Activated CD4-positive, alpha-beta T cell treated with anti-CD3 and anti-CD28 coated beads for 36 hours (primary cell): ENCODE measurements at regions of chr4 and their contacts with region 1.

Region 1: DNA sequence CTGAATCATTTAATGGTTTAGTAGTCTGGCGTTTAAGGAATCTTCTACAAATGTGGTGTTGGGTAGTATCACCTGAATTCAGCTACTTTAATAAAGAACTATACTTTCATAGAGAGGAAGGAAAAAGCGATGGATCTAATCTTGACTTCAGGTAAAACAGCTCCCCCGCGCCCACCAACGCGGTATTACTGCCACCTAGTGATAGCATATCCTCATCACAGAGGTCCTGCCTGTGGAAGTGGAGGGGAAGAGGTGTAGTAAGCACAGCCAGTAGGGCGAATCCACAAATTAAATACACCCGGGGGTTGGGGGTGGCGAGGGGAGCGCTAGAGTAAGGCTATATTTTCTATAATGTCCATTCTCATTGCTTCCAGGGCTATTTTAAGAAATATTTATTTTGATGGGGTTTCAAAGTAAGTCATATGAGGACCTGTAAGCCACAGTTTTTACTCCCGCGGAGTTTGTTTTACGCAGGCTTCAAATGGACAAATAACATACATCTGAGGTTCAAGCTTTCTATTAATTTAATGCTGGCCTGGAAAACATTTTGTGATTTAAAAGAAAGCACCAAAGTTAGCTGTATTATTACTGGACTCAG is 8.3 kb upstream of the DAPP1 start:
- DNase-seq: peak; percentile 86
- ATAC-seq: peak; percentile 95
- H3K4me3 Mint-ChIP-seq: no peak overlapping the region
- H3K27ac Mint-ChIP-seq: no peak overlapping the region
- H3K4me1 Mint-ChIP-seq: peaks cover 17% of the 10 kb centered on the region
- H3K27me3 Mint-ChIP-seq: no peaks in the 10 kb centered on the region

Region 2: GRCh38 chr4:99252746-99253145 is 555.6 kb before region 1 on chr4:
- CTCF ChIA-PET with region 1: no interaction called
- POLR2A ChIA-PET with region 1: no interaction called
- intact Hi-C with region 1: no loop called
- DNase-seq: no peak
- ATAC-seq: no peak
- H3K4me3 Mint-ChIP-seq: no peak overlapping the region
- H3K27ac Mint-ChIP-seq: no peak overlapping the region
- H3K4me1 Mint-ChIP-seq: no peaks in the 10 kb centered on the region
- H3K27me3 Mint-ChIP-seq: peaks cover 2% of the 10 kb centered on the region

Region 3: GRCh38 chr4:99462875-99463464 is 345.4 kb before region 1 on chr4:
- CTCF ChIA-PET with region 1: interaction called, 3 read pairs
- POLR2A ChIA-PET with region 1: no interaction called
- intact Hi-C with region 1: loop called in 1 of 2 experiments (anchors 2 kb)
- DNase-seq: peak; percentile 70
- ATAC-seq: peak; percentile 84
- H3K4me3 Mint-ChIP-seq: no peak overlapping the region
- H3K27ac Mint-ChIP-seq: no peak overlapping the region
- H3K4me1 Mint-ChIP-seq: no peaks in the 10 kb centered on the region
- H3K27me3 Mint-ChIP-seq: no peaks in the 10 kb centered on the region

Region 4: GRCh38 chr4:99710681-99711345 is 97.5 kb before region 1 on chr4:
- CTCF ChIA-PET with region 1: interaction called, 10 read pairs
- POLR2A ChIA-PET with region 1: no interaction called
- intact Hi-C with region 1: no loop called
- DNase-seq: peak; percentile 5
- ATAC-seq: peak; percentile 100
- H3K4me3 Mint-ChIP-seq: no peak overlapping the region
- H3K27ac Mint-ChIP-seq: no peak overlapping the region
- H3K4me1 Mint-ChIP-seq: peaks cover 13% of the 10 kb centered on the region
- H3K27me3 Mint-ChIP-seq: peaks cover 11% of the 10 kb centered on the region

Region 5: DNA sequence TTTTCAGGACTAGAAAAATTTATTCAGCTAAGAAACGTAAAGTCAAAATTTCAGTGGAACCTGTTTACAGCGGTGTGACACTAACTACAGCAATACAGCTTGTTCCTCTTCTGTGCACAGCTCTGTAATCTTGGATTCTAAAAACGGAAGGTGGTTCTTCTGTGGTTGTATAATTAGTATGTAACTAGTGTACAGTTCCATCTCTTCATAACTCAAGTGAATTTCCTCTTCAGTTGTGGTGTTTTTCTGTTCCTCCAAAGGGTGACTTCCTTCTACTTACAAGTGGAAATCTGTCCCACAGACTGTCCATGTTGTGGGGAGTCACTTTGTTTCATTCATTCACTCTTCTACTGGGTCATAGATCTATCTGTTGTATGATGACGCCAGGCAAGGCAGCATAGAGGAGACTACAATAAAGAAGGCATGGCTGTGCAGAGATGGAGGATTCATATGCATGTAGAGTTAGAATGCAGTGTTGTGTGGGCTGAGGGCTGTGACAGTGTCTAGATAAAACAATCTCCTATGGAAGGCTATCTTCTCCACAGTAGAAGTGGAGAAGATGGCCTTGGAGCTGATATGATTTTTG is 13.7 kb after region 1 on chr4:
- CTCF ChIA-PET with region 1: interaction called, 25 read pairs
- POLR2A ChIA-PET with region 1: no interaction called
- intact Hi-C with region 1: no loop called
- DNase-seq: no peak
- ATAC-seq: peak; percentile 40
- H3K4me3 Mint-ChIP-seq: no peak overlapping the region
- H3K27ac Mint-ChIP-seq: peak overlapping the region; percentile 26
- H3K4me1 Mint-ChIP-seq: peaks cover 76% of the 10 kb centered on the region
- H3K27me3 Mint-ChIP-seq: no peaks in the 10 kb centered on the region

Region 6: DNA sequence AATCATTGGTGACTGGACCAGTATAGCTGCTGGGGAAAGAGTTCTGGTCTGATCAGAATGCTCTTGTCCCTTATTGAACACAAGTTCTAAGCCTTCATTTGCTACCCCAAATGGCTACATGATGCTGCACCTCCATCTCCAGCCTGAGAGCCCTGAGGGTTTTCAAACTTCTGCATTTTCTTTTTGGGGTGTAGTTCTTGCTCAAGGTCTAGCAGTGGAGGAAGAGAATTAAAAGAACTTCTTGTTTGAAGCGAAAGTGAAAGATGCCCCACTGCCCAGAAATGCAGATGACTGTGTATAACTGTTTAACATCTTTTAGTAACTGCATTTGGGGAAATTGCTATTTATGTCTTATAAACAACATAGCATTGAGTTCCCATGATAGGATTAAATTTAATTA is 47.3 kb after region 1 on chr4:
- CTCF ChIA-PET with region 1: interaction called, 19 read pairs
- POLR2A ChIA-PET with region 1: no interaction called
- intact Hi-C with region 1: no loop called
- DNase-seq: peak; percentile 49
- ATAC-seq: peak; percentile 16
- H3K4me3 Mint-ChIP-seq: no peak overlapping the region
- H3K27ac Mint-ChIP-seq: peak overlapping the region; percentile 70
- H3K4me1 Mint-ChIP-seq: peaks cover 67% of the 10 kb centered on the region
- H3K27me3 Mint-ChIP-seq: no peaks in the 10 kb centered on the region

Region 7: DNA sequence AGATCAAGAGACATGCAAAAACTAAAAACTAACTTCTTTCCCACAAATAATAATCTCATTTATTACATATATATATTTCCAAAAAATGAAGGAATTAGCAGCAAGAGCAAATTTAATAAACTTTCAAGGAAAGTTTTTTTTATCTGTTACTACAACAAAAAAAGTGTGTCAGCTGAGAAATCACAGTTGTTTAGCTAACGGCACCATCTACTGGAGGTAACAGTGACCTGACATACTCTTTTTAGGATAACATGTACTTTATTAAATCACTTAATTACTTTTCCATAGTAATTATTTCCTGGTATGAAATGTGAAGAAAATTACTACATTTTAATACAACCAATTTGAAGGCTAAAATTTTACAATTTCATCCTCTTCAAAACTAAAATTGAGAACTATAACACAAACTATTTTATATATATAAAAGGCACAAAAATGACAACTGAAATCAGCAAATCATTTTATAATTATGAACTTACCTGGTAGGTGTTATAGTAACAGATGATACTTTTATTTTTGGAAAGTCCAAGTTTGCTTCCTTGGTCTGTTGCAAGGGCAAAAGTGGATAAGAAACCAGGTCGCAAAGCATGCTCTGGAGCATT is 76.8 kb after region 1 on chr4:
- CTCF ChIA-PET with region 1: interaction called, 56 read pairs
- POLR2A ChIA-PET with region 1: no interaction called
- intact Hi-C with region 1: loop called (anchors 1 kb)
- DNase-seq: peak; percentile 40
- ATAC-seq: no peak
- H3K4me3 Mint-ChIP-seq: no peak overlapping the region
- H3K27ac Mint-ChIP-seq: no peak overlapping the region
- H3K4me1 Mint-ChIP-seq: peaks cover 10% of the 10 kb centered on the region
- H3K27me3 Mint-ChIP-seq: no peaks in the 10 kb centered on the region

Region 8: GRCh38 chr4:100060765-100061416 is 252.5 kb after region 1 on chr4:
- CTCF ChIA-PET with region 1: no interaction called
- POLR2A ChIA-PET with region 1: no interaction called
- intact Hi-C with region 1: loop called in 1 of 2 experiments (anchors 2 kb)
- DNase-seq: no peak
- ATAC-seq: no peak
- H3K4me3 Mint-ChIP-seq: no peak overlapping the region
- H3K27ac Mint-ChIP-seq: no peak overlapping the region
- H3K4me1 Mint-ChIP-seq: no peaks in the 10 kb centered on the region
- H3K27me3 Mint-ChIP-seq: peaks cover 7% of the 10 kb centered on the region